ENCODE measurements at regions of chr20 and their contacts with region 1.

Region 1: DNA sequence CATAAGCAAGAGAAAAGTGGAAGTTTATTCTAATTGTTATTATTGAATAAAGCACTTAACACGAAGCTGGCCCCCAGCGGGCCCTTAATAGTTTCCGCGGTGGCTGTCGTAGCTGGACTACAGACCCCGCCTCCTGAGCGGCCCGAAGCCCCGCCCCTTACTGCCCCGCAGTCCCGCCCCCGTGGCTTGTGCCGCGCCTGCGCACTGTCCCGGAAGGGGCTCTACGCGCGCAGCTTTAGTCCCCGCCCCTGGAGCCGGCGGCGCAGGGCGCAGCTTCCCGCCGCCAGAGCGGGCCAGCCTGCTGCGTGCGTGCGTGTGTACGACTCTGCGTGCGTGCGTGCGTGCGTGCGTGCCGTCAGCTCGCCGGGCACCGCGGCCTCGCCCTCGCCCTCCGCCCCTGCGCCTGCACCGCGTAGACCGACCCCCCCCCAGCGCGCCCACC is at the start of gene VAPB:
- DNase-seq: peak; percentile 85 to 98 (median 95)

Region 2: GRCh38 chr20:58309575-58310290 is 79.2 kb before region 1 on chr20 and contains the start of gene RAB22A:
- intact Hi-C with region 1: loop called (anchors 5 kb)
- DNase-seq: peak in 41 of 42 donors; percentile 40 to 94 (median 82)

Region 3: GRCh38 chr20:58650776-58651558 is 262.1 kb after region 1 on chr20 and contains the start of gene STX16:
- intact Hi-C with region 1: loop called (anchors 10 kb)
- DNase-seq: peak; percentile 71 to 96 (median 90)